Dendritic cell treated with granulocyte-macrophage colony-stimulating factor and Interleukin-4, amounts not matched to agents 40 ng/mL and 50 ng/mL, for 4 days (primary cell): ENCODE measurements at regions of chr7 and their contacts with region 1.

Region 1: GRCh38 chr7:2757904-2758672 is 70.1 kb downstream of the AMZ1 start:
- H3K4me3 Mint-ChIP-seq: peak overlapping the region; percentile 61
- H3K27ac Mint-ChIP-seq: peak overlapping the region; percentile 84
- H3K4me1 Mint-ChIP-seq: peaks cover 69% of the 10 kb centered on the region
- H3K27me3 Mint-ChIP-seq: no peaks in the 10 kb centered on the region

Region 2: GRCh38 chr7:2729701-2730417 is 28.2 kb before region 1 on chr7:
- intact Hi-C with region 1: loop called (anchors 5 kb)
- H3K4me3 Mint-ChIP-seq: no peak overlapping the region
- H3K27ac Mint-ChIP-seq: peak overlapping the region; percentile 84
- H3K4me1 Mint-ChIP-seq: peaks cover 60% of the 10 kb centered on the region
- H3K27me3 Mint-ChIP-seq: no peaks in the 10 kb centered on the region

Region 3: DNA sequence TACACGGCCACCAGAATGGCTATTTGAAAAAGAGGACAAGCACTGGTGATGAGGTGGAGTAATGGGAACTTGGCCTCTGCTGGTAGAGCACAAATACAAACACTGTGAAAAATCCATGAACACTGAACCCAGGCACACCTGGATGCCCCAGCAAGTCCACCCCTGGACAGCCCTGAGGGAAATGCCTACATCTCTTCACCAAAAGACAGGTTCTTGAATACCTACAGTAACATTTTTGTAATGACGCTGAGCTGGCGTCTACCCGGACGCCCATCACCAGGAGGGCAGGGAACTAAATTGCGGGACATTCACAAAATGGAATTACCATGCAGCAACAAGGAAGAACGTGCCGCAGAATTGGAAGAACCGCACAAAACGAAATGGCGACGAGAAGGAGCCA is 15.5 kb after region 1 on chr7:
- intact Hi-C with region 1: loop called (anchors 1 kb)
- H3K4me3 Mint-ChIP-seq: peak overlapping the region; percentile 45
- H3K27ac Mint-ChIP-seq: peak overlapping the region; percentile 95
- H3K4me1 Mint-ChIP-seq: peaks cover 75% of the 10 kb centered on the region
- H3K27me3 Mint-ChIP-seq: no peaks in the 10 kb centered on the region